Endothelial cell of umbilical vein (primary cell): ENCODE measurements at regions of chr1 and their contacts with region 1.

Region 1: DNA sequence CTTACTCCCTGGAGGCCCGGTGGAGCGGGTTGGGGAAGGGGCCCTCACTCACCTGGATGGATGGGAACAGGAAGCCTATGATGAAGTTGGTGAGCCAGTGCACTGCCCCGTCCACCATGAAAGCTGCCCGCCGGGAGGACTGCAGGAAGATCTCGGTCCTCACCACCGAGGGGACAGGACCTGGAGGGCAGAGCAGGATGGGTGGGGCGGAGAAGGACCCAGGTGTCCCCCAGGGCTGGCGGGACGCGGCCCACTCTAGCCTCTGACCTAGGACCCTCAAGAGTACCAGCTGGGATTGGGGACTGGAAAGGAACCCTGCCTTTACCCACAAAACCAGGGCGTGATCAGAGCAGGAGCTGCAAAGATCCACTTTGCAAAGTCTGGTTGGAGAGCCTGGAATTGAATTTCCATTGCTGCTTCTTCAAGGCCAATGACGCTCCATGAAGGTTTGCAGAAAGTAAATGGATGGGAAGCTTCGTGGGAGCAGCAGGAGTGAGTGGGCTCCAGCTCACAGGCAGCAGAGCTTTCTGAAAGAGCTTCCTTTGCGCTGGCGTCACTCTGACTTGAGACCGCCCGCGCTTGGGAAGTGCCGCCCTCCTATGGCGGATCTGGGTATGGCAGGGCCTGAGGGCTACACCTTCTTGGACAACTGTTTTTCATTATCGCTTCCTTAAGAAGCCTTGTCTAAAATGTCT is 21.4 kb downstream of the SLC2A7 start:
- DNase-seq: peak; percentile 85
- H3K4me3 ChIP-seq: no peak overlapping the region
- H3K27ac ChIP-seq: no peak overlapping the region
- H3K4me1 ChIP-seq: no peaks in the 10 kb centered on the region
- H3K27me3 ChIP-seq: peaks cover 0 to 4% of the 10 kb centered on the region in 2 experiments
- CTCF ChIP-seq: peak; percentile 91 to 96
- POLR2A ChIP-seq: no peak

Region 2: GRCh38 chr1:8866792-8867415 is 137.9 kb before region 1 on chr1:
- CTCF ChIA-PET with region 1: interaction called, 106 read pairs
- POLR2A ChIA-PET with region 1: no interaction called
- dilution Hi-C with region 1: no loop called
- intact Hi-C with region 1: no loop called
- DNase-seq: no peak
- H3K4me3 ChIP-seq: no peak overlapping the region
- H3K27ac ChIP-seq: no peak overlapping the region
- H3K4me1 ChIP-seq: peaks cover 5% of the 10 kb centered on the region
- H3K27me3 ChIP-seq: no peaks in the 10 kb centered on the region
- CTCF ChIP-seq: no peak
- POLR2A ChIP-seq: no peak

Region 3: GRCh38 chr1:8910914-8911313 is 93.9 kb before region 1 on chr1:
- CTCF ChIA-PET with region 1: interaction called, 371 read pairs
- POLR2A ChIA-PET with region 1: no interaction called
- dilution Hi-C with region 1: no loop called
- intact Hi-C with region 1: no loop called
- DNase-seq: no peak
- H3K4me3 ChIP-seq: no peak overlapping the region
- H3K27ac ChIP-seq: no peak overlapping the region
- H3K4me1 ChIP-seq: no peaks in the 10 kb centered on the region
- H3K27me3 ChIP-seq: peaks cover 0 to 4% of the 10 kb centered on the region in 2 experiments
- CTCF ChIP-seq: no peak
- POLR2A ChIP-seq: no peak

Region 4: DNA sequence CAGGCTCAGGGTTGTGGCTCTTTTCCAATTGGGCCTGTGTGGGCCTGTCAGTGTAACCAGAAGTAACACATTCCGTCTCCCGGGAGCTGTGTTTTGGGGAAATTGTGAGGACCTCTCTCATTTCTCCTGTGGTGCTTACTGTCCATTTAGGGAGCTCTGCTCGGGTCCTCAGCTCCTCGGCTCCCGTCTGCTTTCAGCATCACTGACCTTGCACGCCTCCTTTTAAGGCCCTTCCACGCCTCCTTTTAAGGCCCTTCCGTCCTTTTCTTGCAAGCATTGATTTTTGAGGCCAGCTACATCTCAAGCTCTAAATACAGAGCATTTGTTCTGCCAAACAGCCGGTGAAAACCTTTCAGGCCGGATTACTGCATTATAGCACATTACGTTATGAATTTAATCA is 49.4 kb before region 1 on chr1:
- CTCF ChIA-PET with region 1: interaction called, 17 read pairs
- POLR2A ChIA-PET with region 1: no interaction called
- dilution Hi-C with region 1: no loop called
- intact Hi-C with region 1: loop called (anchors 5 kb)
- DNase-seq: no peak
- H3K4me3 ChIP-seq: no peak overlapping the region
- H3K27ac ChIP-seq: no peak overlapping the region
- H3K4me1 ChIP-seq: no peaks in the 10 kb centered on the region
- H3K27me3 ChIP-seq: no peaks in the 10 kb centered on the region
- CTCF ChIP-seq: no peak
- POLR2A ChIP-seq: no peak

Region 5: DNA sequence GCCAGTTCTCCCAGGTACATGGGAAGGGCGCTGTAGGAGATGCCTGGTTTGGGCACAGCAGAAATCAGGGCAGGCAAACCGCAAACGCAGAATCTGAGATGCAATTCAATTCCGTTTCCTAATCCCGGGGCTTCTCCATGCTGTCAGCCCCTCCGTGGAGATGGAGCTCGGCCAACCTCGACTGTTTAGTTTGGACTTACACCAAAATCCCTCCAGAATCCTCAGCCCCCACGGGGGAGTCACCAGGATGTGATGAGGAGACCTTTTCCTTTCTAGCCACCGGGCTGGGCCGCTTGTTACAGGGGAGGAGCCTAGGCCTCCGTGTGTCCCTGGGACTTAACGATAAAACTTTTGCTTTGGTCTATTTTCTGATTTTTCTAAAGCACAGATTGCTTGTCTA is 13.5 kb after region 1 on chr1:
- CTCF ChIA-PET with region 1: interaction called, 47 read pairs
- POLR2A ChIA-PET with region 1: no interaction called
- dilution Hi-C with region 1: no loop called
- intact Hi-C with region 1: no loop called
- DNase-seq: peak; percentile 89
- H3K4me3 ChIP-seq: no peak overlapping the region
- H3K27ac ChIP-seq: no peak overlapping the region
- H3K4me1 ChIP-seq: peaks cover 12% of the 10 kb centered on the region
- H3K27me3 ChIP-seq: no peaks in the 10 kb centered on the region
- CTCF ChIP-seq: no peak
- POLR2A ChIP-seq: no peak

Region 6: GRCh38 chr1:9081473-9081872 is 76.6 kb after region 1 on chr1:
- CTCF ChIA-PET with region 1: interaction called, 13 read pairs
- POLR2A ChIA-PET with region 1: no interaction called
- dilution Hi-C with region 1: no loop called
- intact Hi-C with region 1: no loop called
- DNase-seq: no peak
- H3K4me3 ChIP-seq: no peak overlapping the region
- H3K27ac ChIP-seq: no peak overlapping the region
- H3K4me1 ChIP-seq: no peaks in the 10 kb centered on the region
- H3K27me3 ChIP-seq: peaks cover 0 to under 1% of the 10 kb centered on the region in 2 experiments
- CTCF ChIP-seq: no peak
- POLR2A ChIP-seq: no peak